MCF 10A (cell line): ENCODE measurements at regions of chr1 and their contacts with region 1.

Region 1: GRCh38 chr1:1059494-1060280 is 14.4 kb downstream of the RNF223 start:
- DNase-seq: peak; percentile 85
- H3K4me3 Mint-ChIP-seq: peak overlapping the region; percentile 76
- H3K27ac Mint-ChIP-seq: no peak overlapping the region
- H3K4me1 Mint-ChIP-seq: peaks cover 16% of the 10 kb centered on the region
- H3K27me3 Mint-ChIP-seq: no peaks in the 10 kb centered on the region
- CTCF ChIP-seq: no peak

Region 2: DNA sequence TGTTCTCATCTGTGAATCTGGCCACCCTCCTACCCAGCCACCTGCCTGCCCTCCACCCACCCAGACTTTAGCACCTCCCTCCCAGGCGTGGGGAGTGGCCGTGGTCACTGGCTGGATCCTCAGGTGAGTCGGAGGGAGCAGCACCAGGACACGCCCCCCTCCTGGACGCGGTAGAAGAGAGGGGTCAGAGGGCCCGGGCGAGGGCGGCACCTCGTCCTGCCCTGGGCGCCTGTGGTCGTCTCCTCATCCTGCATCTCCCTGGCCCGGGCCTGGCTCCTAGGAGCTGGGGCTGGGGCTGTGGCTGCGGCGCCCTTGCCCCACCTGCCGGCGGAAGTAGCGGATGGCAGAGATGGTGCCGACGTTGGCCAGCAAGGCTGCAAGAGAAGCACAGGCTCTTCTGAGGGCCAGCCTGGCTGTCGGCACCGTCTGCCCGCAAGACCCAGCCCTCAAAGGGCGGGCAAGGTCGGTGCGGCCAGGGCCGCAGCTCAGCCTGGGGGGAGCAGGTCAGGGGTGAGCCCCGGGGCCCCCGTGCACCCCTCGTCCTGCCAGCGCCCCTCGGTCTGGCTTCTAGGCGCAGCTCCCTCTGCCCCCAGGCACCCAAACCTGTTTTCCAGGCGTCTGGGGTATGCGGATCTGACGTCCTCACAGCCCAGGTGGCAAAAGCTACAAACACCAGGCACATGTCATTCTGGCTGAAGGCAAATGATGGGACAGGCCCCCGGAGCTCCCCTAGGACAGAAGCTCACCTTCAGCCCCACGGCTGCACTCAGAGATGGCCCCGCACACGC is 83.6 kb before region 1 on chr1:
- CTCF ChIA-PET with region 1: interaction called, 117 read pairs
- POLR2A ChIA-PET with region 1: no interaction called
- intact Hi-C with region 1: no loop called
- DNase-seq: peak; percentile 83
- H3K4me3 Mint-ChIP-seq: no peak overlapping the region
- H3K27ac Mint-ChIP-seq: no peak overlapping the region
- H3K4me1 Mint-ChIP-seq: peaks cover 6% of the 10 kb centered on the region
- H3K27me3 Mint-ChIP-seq: no peaks in the 10 kb centered on the region
- CTCF ChIP-seq: peak; percentile 73

Region 3: DNA sequence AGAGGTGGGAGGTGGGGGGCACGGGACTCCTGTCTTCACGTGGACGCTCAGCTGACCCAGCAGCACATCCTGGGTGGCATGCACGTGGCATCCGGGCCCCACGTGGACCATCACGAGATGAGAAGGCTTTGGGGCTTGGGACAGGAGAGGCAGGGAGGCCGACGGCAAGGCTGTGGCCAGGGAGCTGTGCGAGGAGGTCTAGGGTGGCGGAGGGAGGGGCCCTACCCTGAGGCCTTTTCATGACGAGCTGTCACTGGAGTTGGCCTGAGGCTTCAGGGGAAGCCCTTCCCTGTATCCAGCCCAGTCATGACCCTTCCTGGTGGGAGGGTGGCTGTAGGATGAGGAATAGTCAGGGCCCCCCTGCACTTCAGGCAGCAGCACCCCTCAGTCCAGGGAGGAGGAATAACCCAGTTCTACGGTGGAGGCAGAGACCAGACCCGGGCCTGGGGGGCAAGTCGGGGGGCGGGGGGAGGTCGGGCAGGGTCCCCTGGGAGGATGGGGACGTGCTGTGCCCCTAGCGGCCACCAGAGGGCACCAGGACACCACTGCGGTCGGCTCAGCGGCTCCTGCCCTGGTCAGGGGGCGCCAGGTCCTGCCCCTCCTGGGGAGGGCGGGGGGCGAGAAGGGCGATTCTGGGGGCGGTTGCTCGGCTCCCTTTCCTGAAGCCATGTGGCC is 75.8 kb before region 1 on chr1:
- CTCF ChIA-PET with region 1: interaction called, 117 read pairs
- POLR2A ChIA-PET with region 1: interaction called, 4 read pairs
- intact Hi-C with region 1: loop called (anchors 1 kb)
- DNase-seq: no peak
- H3K4me3 Mint-ChIP-seq: no peak overlapping the region
- H3K27ac Mint-ChIP-seq: no peak overlapping the region
- H3K4me1 Mint-ChIP-seq: no peaks in the 10 kb centered on the region
- H3K27me3 Mint-ChIP-seq: peaks cover 28% of the 10 kb centered on the region
- CTCF ChIP-seq: peak; percentile 98

Region 4: DNA sequence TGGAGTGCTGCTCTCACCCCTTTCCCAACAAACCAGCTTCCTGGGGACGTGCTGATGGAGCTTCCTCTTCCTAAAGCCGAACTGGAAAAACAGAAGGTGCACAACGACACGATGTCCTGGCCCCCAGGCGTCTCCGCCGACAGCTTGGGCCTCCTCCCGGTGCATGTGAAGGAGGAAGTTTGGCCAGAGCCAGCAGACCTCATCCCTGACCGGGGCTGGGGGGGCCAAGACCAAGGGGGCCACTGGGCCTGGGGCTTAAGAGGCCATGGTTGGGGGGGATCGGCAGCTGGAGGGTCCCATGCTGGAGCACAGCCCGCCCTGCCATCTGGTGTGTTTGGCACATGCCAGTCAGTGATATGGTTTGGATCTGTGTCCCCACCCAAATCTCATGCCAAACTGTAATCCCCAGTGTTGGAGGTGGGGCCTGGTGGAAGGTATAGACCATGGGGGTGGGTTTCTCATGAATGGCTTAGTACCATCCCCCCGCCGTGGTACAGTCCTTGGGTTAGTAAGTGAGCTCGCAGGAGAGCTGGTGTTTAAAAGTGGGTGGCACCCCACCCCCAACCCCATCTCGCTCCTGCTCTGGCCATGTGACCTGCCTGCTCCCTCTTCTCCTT is 66.2 kb before region 1 on chr1:
- CTCF ChIA-PET with region 1: interaction called, 12 read pairs
- POLR2A ChIA-PET with region 1: interaction called, 3 read pairs
- intact Hi-C with region 1: no loop called
- DNase-seq: no peak
- H3K4me3 Mint-ChIP-seq: no peak overlapping the region
- H3K27ac Mint-ChIP-seq: no peak overlapping the region
- H3K4me1 Mint-ChIP-seq: peaks cover 4% of the 10 kb centered on the region
- H3K27me3 Mint-ChIP-seq: peaks cover 19% of the 10 kb centered on the region
- CTCF ChIP-seq: no peak

Region 5: DNA sequence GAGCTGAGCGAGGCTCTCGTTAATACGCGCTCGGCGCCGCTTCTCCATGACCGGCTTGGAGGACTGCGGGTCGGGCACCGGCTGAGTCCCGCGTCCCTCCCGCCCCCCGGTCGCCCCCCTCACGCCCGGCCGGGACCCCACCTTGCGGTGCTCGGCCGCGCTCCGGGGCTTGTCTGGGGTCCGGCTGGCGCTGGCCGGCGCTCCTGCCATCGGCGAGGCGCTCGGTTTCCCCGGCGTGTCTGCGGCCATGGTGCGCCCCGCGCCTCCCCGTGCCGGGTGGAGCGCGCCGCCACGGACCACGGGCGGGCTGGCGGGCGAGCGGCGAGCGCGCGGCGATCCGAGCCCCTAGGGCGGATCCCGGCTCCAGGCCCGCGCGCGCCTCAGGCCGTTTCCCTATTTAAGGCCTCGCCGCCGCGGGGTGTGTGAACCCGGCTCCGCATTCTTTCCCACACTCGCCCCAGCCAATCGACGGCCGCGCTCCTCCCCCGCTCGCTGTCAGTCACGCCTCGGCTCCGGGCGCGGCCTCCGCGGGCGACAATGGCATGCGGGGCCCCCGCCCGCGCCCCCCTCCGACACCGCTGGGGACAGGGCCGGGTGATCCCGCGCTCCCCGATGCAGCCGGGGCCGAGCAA is 59.8 kb before region 1 on chr1 and contains the start of gene HES4:
- CTCF ChIA-PET with region 1: interaction called, 9 read pairs
- POLR2A ChIA-PET with region 1: interaction called, 4 read pairs
- intact Hi-C with region 1: loop called (anchors 5 kb)
- DNase-seq: peak; percentile 92
- H3K4me3 Mint-ChIP-seq: peak within 1 kb of the TSS; percentile 82
- H3K27ac Mint-ChIP-seq: peak within 1 kb of the TSS; percentile 94
- H3K4me1 Mint-ChIP-seq: peaks cover 13% of the 10 kb centered on the region
- H3K27me3 Mint-ChIP-seq: no peaks in the 10 kb centered on the region
- CTCF ChIP-seq: no peak
- total RNA-seq, gene HES4: 42.1 and 42.6 TPM in 2 replicates

Region 6: DNA sequence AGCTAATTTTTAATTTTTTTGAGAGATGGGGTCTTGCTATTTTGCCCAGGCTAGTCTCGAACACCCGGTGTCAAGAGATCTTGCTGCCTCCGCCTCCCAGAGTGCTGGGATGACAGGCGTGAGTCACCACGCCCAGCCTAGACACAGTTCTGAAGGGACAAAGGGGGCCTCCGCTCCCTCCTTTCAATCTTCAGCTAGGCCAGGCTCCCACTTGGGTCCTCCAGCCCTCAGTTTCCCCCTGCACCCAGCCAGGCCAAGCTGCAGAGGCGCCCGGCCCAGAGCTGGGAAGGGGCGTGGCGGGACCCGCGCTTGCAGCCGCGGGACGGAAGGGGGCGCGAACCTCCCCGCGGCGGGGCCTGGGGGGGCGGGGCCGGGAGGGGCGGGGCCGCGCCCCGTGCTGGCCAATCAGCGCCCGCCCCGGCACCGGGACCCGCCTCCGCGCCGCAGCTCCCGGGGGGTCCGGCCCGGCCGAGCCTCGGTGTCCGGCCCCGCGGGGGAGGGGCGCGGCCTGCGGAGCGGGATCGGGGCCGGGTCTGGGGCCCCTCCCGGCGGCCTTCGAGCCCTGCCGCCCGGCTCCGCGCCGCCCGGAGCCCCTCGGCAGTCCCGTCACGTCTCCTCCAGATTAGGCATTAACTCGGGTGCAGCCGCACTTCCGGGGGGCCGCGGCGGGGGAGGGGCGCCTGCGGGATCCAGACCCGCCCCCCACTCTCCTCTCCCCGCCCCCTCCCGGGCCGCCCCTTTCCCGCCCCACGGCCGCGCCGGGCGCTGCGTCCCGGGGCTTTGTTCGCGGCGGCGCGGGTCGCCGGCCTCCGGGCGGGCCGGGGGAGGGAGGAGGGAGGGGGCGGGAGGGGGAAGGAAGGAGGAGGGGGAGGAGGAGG is 40.3 kb before region 1 on chr1:
- CTCF ChIA-PET with region 1: interaction called, 65 read pairs
- POLR2A ChIA-PET with region 1: interaction called, 8 read pairs
- intact Hi-C with region 1: loop called (anchors 2 kb)
- DNase-seq: peak; percentile 73
- H3K4me3 Mint-ChIP-seq: no peak overlapping the region
- H3K27ac Mint-ChIP-seq: no peak overlapping the region
- H3K4me1 Mint-ChIP-seq: peaks cover 11% of the 10 kb centered on the region
- H3K27me3 Mint-ChIP-seq: no peaks in the 10 kb centered on the region
- CTCF ChIP-seq: peak; percentile 45